Adrenal gland (tissue), 19 donors: ENCODE measurements at regions of chr22 and their contacts with region 1.

Region 1: GRCh38 chr22:19179497-19180225 is 1.1 kb upstream of the SLC25A1 start:
- DNase-seq: peak; percentile 73 to 92 (median 86)
- H3K4me3 ChIP-seq: peak overlapping the region in 2 of 4 donors; percentile 79 to 94
- H3K27ac ChIP-seq: peak overlapping the region; percentile 52 to 97 (median 85)
- H3K4me1 ChIP-seq: peaks cover 17 to 25% of the 10 kb centered on the region in 2 donors
- H3K27me3 ChIP-seq: no peaks in the 10 kb centered on the region
- CTCF ChIP-seq: peak; percentile 58 to 82 (median 76)
- POLR2A ChIP-seq: no peak

Region 2: DNA sequence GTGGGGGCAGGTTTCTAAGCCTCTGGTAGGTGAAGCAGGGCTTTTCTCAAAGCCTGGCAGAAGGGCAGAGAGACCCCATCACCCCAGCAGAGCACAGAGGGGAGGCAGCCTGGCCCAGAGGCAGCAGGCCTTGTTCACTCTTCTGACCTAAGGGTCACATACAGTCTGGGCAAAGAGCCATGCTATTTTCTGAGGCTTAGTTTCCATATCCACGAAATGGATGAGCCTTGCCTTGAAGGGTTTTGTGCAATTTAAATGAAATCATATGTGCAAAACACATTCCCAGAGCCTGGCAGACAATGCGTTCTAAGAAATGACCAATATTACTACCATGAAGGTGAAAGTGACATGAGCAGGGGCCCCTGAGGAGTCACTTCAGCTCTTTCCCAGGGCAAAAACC is 207.4 kb after region 1 on chr22:
- intact Hi-C with region 1: loop called in 1 of 2 experiments (anchors 10 kb)
- DNase-seq: peak in 1 of 7 donors; percentile 15
- H3K4me3 ChIP-seq: no peak overlapping the region
- H3K27ac ChIP-seq: no peak overlapping the region
- H3K4me1 ChIP-seq: no peaks in the 10 kb centered on the region
- H3K27me3 ChIP-seq: no peaks in the 10 kb centered on the region
- CTCF ChIP-seq: no peak
- POLR2A ChIP-seq: no peak